HEK293 (cell line): ENCODE measurements at regions of chr17 and their contacts with region 1.

Region 1: DNA sequence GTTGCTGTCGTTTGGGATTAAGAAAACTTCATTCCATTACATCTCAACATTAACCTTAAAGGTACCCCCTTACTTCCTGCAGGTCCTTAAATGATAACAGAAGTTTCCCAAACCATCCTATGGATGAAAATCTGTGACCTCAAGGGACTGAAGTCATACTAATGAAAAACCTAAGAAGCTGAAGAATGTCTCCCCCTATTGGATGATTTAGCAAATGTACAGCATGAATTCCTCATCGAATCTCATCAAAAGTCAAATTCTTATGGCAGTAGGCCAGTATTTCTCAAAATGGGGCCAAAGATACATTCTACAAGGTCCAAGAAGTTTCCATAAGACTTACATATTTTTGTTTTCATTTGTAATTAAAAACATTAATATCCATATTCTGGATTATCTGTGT is 13.5 kb downstream of the SCO1 start:
- H3K4me3 ChIP-seq: no peak overlapping the region
- H3K27ac ChIP-seq: no peak overlapping the region
- H3K4me1 ChIP-seq: no peaks in the 10 kb centered on the region
- CTCF ChIP-seq: no peak

Region 2: GRCh38 chr17:10697092-10698081 is 13.5 kb after region 1 on chr17 and contains the starts of genes ADPRM and SCO1:
- CTCF ChIA-PET with region 1: interaction called, 34 read pairs
- POLR2A ChIA-PET with region 1: no interaction called
- H3K4me3 ChIP-seq: peak within 1 kb of the TSS; percentile 78
- H3K27ac ChIP-seq: peak within 1 kb of the TSS; percentile 81
- H3K4me1 ChIP-seq: peaks cover 6% of the 10 kb centered on the region
- CTCF ChIP-seq: peak; percentile 88; the same call in 1 of the 2 replicates

Region 3: DNA sequence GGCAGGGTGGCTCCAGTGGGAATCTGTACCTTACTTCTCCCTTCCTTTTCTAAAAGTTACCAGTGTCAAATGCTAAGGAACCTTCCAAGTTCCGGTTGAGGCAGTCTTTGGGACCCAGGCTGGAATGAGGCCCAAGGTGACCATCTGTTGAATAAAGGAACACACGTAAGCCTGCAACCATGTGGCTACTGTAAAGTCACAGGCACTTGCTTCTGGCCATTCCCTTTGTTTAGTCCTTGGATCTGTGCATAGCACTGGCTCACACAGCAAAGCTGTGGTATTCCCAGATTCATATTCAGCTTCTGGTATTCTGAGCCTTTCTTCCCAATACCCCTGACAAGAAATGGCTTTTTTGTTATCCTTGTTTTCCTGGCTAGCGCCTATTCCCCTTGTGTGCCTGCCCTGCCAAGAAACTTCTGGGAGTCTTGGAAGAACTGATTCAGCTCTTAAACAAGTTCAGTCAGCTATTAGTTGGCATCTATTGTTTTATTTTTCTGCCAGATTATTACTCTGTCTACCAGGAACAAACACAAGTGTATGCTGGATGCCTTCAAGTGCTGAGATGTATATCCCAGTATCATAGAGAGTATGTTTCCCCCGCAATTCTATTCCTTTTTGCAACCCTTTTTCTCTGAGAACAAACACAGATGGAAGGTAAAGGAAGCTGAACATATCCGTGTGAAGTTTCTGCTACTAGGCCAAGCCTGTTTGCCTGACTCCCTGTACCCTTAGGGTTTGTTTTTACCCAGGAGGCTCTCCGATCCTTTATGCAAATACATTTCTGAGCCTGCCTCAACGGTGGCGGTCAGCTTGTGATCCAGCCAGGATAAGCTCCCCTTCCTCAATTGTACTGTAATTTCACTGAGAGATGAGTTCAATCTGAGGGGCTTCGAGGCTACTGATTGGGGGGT is 106.9 kb after region 1 on chr17:
- CTCF ChIA-PET with region 1: no interaction called
- POLR2A ChIA-PET with region 1: no interaction called
- H3K4me3 ChIP-seq: no peak overlapping the region
- H3K27ac ChIP-seq: no peak overlapping the region
- H3K4me1 ChIP-seq: 0 out of 2 replicates have a peak, but pooled peaks cover 3% of the 10 kb centered on the region
- CTCF ChIP-seq: no peak